ENCODE measurements at regions of chr3 and their contacts with region 1.

Region 1: DNA sequence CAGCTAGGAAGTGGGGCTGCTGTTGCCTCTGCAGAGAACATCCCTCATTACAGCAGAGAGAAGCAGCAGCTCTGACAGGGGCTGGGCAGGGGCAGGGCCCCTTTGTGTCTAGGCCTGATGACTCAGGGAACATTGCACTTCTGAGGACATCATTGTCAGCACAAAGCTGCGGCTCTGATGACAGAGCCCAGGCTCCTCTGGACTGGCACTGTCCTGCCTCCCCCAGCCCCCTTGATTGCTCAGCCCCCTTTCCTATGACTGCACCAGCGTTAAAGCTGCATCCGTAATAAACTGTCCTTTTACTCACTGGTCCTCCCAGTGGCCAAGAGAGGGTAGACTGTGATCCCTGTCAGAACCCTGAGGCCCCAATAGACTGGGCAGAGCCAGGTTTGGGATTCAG is 18.3 kb downstream of the TRH start:
- DNase-seq: no peak
- ATAC-seq: peak in 4 of 8 donors; percentile 30 to 51 (median 38)
- H3K4me3 ChIP-seq: no peak overlapping the region
- H3K27ac ChIP-seq: no peak overlapping the region
- H3K4me1 ChIP-seq: no peaks in the 10 kb centered on the region
- H3K27me3 ChIP-seq: peaks cover 0 to 37% (median under 1%) of the 10 kb centered on the region in 7 donors
- CTCF ChIP-seq: peak in 3 of 9 donors; percentile 28 to 32 (median 29)

Region 2: GRCh38 chr3:129690406-129690805 is 302.4 kb before region 1 on chr3:
- intact Hi-C with region 1: no loop called
- DNase-seq: peak in 1 of 2 donors; percentile 59
- ATAC-seq: peak in 7 of 8 donors; percentile 33 to 78 (median 52)
- H3K4me3 ChIP-seq: no peak overlapping the region
- H3K27ac ChIP-seq: no peak overlapping the region
- H3K4me1 ChIP-seq: peaks cover 0 to 43% (median 21%) of the 10 kb centered on the region in 9 donors
- H3K27me3 ChIP-seq: no peaks in the 10 kb centered on the region
- CTCF ChIP-seq: no peak

Region 3: DNA sequence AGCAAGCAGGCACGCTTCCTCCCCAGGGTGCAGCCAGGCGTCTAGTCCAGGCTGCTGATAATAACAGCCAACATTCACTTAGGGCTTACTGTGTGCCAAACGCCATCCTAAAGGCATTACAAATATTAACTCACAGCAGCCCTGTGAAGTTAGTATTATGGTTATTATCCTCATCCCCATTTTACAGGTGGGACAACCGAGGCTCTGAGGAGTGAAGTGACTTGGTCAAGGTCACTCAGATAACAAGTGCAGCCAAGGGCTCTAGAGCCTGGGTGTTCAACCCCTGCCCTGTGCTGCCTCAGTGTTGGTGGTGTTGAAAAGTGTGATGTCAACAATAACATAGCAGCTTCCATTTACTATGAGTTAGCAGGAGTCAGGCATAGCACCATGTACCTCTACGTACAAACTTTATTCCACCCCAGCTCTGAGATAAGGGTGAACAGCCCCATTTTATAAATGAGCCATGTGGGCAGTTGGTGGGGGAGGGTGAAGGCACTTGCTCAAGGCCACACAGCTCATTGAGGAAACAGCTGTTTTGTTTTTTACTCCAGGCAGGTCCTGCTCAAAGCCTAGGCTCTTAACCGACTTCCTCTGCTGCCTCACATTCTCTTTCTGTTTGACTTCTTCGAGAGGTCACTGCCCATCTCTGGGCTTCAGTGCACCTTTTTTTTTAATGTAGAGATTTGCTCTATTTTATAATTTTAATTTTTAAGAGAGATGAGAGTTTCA is 42.3 kb before region 1 on chr3:
- intact Hi-C with region 1: loop called in 3 of 10 experiments (anchors 5 to 10 kb)
- DNase-seq: no peak
- ATAC-seq: no peak
- H3K4me3 ChIP-seq: no peak overlapping the region
- H3K27ac ChIP-seq: no peak overlapping the region
- H3K4me1 ChIP-seq: peaks cover 0 to 8% (median 0%) of the 10 kb centered on the region in 9 donors
- H3K27me3 ChIP-seq: peaks cover 0 to 11% (median 0%) of the 10 kb centered on the region in 7 donors
- CTCF ChIP-seq: no peak